GM12878 (cell line): ENCODE measurements at regions of chr2 and their contacts with region 1.

Region 1: GRCh38 chr2:205680067-205680466 is 2.2 kb upstream of the NRP2 start:
- DNase-seq: no peak
- ATAC-seq: peak; percentile 81
- H3K4me3 ChIP-seq: no peak overlapping the region
- H3K27ac ChIP-seq: no peak overlapping the region
- H3K4me1 ChIP-seq: peaks cover 11% of the 10 kb centered on the region
- H3K27me3 ChIP-seq: peaks cover 11 to 13% of the 10 kb centered on the region in 2 experiments
- CTCF ChIP-seq: peak; percentile 60 to 78 (median 63)
- EP300 ChIP-seq: no peak
- POLR2A ChIP-seq: no peak
- RAD21 ChIP-seq: peak; percentile 69

Region 2: DNA sequence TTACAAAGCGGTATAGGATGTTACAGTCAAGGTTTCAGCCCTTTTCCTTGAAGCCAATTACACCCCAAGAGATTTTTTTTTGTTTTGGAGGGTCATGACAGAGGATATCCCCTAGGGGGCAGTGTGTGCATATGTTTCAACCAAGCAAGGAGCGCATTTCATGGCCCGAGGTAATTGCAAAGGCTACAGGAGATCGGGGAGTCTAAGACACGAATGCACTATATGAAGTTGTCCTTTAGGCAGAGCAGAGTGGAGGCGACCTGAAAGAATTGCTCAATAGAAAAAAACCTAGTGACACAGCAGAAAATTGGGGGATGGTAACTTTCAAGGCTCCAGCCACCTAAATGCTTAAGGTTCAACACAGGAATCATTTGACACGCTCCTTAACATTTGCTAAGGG is 1354.6 kb before region 1 on chr2:
- CTCF ChIA-PET with region 1: interaction called, 6 read pairs
- POLR2A ChIA-PET with region 1: no interaction called
- RAD21 ChIA-PET with region 1: no interaction called
- SMC1A ChIA-PET with region 1: no interaction called
- in situ Hi-C with region 1: loop called (anchors 5 kb)
- intact Hi-C with region 1: loop called (anchors 5 kb)
- DNase-seq: no peak
- ATAC-seq: peak; percentile 87
- H3K4me3 ChIP-seq: no peak overlapping the region
- H3K27ac ChIP-seq: no peak overlapping the region
- H3K4me1 ChIP-seq: no peaks in the 10 kb centered on the region
- H3K27me3 ChIP-seq: no peaks in the 10 kb centered on the region
- CTCF ChIP-seq: peak; percentile 72 to 83 (median 72)
- EP300 ChIP-seq: no peak
- POLR2A ChIP-seq: no peak
- RAD21 ChIP-seq: peak; percentile 90

Region 3: DNA sequence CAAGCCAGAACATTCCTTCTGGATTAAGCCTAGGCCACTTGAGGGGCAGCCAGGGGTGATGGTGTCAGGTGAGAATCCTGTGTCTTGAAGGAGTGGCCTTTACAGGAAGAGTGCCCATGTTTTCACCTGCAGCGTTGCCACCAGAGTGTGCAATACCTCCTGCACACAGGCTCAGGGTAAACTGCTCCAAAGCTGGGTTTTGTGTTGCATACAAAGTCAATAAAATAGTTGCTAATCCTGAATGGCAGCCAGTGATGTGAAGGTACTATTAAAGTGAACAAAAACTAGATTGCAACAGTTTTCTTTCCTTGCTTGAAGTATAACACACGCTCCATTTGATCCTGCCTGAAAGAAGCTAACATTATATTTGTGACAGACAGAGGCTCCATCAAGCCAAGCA is 62.2 kb before region 1 on chr2:
- CTCF ChIA-PET with region 1: interaction called, 15 read pairs
- POLR2A ChIA-PET with region 1: no interaction called
- RAD21 ChIA-PET with region 1: interaction called, 8 read pairs
- SMC1A ChIA-PET with region 1: interaction called, 5 read pairs
- in situ Hi-C with region 1: no loop called
- intact Hi-C with region 1: no loop called
- DNase-seq: no peak
- ATAC-seq: no peak
- H3K4me3 ChIP-seq: no peak overlapping the region
- H3K27ac ChIP-seq: no peak overlapping the region
- H3K4me1 ChIP-seq: no peaks in the 10 kb centered on the region
- H3K27me3 ChIP-seq: peaks cover 2 to 5% of the 10 kb centered on the region in 2 experiments; a peak in 3 of 4 replicates
- CTCF ChIP-seq: no peak
- EP300 ChIP-seq: no peak
- POLR2A ChIP-seq: no peak
- RAD21 ChIP-seq: no peak

Region 4: DNA sequence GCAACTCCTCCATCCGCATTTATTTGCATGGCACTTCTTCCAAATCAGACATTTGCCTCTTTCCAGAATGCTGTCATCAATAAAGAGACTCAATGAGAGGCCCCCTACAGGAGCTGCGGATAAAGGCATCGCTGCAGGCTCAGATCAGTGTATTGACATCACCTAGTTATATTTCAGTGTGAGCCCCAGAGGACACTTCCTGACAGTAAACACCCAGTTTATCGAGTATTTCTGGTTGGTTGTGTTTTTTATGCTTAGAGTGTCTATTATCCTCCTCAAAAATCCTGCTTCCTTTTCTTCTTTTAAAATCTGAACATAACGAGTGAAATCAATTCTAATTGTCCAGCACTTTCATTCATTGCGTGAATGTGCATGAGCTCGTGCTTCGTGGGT is 41.0 kb after region 1 on chr2:
- CTCF ChIA-PET with region 1: interaction called, 22 read pairs
- POLR2A ChIA-PET with region 1: no interaction called
- RAD21 ChIA-PET with region 1: interaction called, 10 read pairs
- SMC1A ChIA-PET with region 1: interaction called, 8 read pairs
- in situ Hi-C with region 1: no loop called
- intact Hi-C with region 1: no loop called
- DNase-seq: no peak
- ATAC-seq: peak; percentile 75
- H3K4me3 ChIP-seq: no peak overlapping the region
- H3K27ac ChIP-seq: no peak overlapping the region
- H3K4me1 ChIP-seq: peaks cover 17% of the 10 kb centered on the region
- H3K27me3 ChIP-seq: no peaks in the 10 kb centered on the region
- CTCF ChIP-seq: peak; percentile 4 to 41 (median 37); a peak in 2 of 6 replicates
- EP300 ChIP-seq: no peak
- POLR2A ChIP-seq: no peak
- RAD21 ChIP-seq: 0 out of 2 replicates have a peak, but pooled peaks have one; percentile 7